Naive thymus-derived CD4-positive, alpha-beta T cell (primary cell): ENCODE measurements at regions of chr14 and their contacts with region 1.

Region 1: GRCh38 chr14:97978341-97978740 is 1181.2 kb downstream of the VRK1 start:
- DNase-seq: peak; percentile 33 to 83 (median 72)
- ATAC-seq: peak; percentile 84
- H3K4me3 ChIP-seq: peak overlapping the region; percentile 91
- H3K4me3 Mint-ChIP-seq: peak overlapping the region; percentile 85 to 99 (median 93)
- H3K27ac ChIP-seq: peak overlapping the region; percentile 85
- H3K27ac Mint-ChIP-seq: peak overlapping the region; percentile 68 to 99 (median 92)
- H3K4me1 ChIP-seq: peaks cover 25 to 40% of the 10 kb centered on the region in 2 donors
- H3K4me1 Mint-ChIP-seq: peaks cover 32 to 64% (median 50%) of the 10 kb centered on the region in 7 donors
- H3K27me3 ChIP-seq: no peaks in the 10 kb centered on the region
- H3K27me3 Mint-ChIP-seq: no peaks in the 10 kb centered on the region

Region 2: GRCh38 chr14:97138801-97139200 is 839.5 kb before region 1 on chr14:
- CTCF ChIA-PET with region 1: no interaction called
- POLR2A ChIA-PET with region 1: no interaction called
- intact Hi-C with region 1: no loop called
- DNase-seq: no peak
- ATAC-seq: no peak
- H3K4me3 ChIP-seq: no peak overlapping the region
- H3K4me3 Mint-ChIP-seq: no peak overlapping the region
- H3K27ac ChIP-seq: no peak overlapping the region
- H3K27ac Mint-ChIP-seq: peak overlapping the region in 1 of 9 donors; percentile 62
- H3K4me1 ChIP-seq: no peaks in the 10 kb centered on the region
- H3K4me1 Mint-ChIP-seq: peaks cover 0 to 11% (median 4%) of the 10 kb centered on the region in 7 donors
- H3K27me3 ChIP-seq: no peaks in the 10 kb centered on the region
- H3K27me3 Mint-ChIP-seq: peaks cover 0 to 6% (median 0%) of the 10 kb centered on the region in 5 donors

Region 3: DNA sequence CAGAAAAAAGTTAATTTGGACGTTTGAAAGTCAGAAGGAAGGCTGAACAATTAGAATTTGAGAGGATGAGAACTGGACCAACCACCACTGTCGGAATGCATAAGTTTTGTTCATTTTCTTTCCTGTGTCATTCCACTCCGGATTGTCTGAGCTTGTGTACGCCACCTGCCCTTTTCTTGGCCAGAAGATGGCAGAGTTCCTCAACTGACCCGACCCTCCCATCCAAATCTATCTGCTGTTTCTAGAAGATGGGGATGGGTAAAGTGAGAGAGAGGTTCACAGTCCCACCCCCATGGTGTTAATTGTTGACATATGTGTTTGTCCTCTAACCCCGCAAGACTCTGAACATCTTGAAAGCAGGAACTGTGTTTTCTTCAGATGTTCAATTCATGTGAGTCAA is 793.2 kb before region 1 on chr14:
- CTCF ChIA-PET with region 1: interaction called, 8 read pairs
- POLR2A ChIA-PET with region 1: no interaction called
- intact Hi-C with region 1: loop called in 1 of 2 experiments (anchors 1 kb)
- DNase-seq: peak in 6 of 9 donors; percentile 1 to 36 (median 30)
- ATAC-seq: peak; percentile 57
- H3K4me3 ChIP-seq: no peak overlapping the region
- H3K4me3 Mint-ChIP-seq: no peak overlapping the region
- H3K27ac ChIP-seq: no peak overlapping the region
- H3K27ac Mint-ChIP-seq: peak overlapping the region in 4 of 9 donors; percentile 7 to 53 (median 41)
- H3K4me1 ChIP-seq: no peaks in the 10 kb centered on the region
- H3K4me1 Mint-ChIP-seq: peaks cover 0 to 22% (median 6%) of the 10 kb centered on the region in 7 donors
- H3K27me3 ChIP-seq: no peaks in the 10 kb centered on the region
- H3K27me3 Mint-ChIP-seq: peaks cover 0 to 22% (median 0%) of the 10 kb centered on the region in 5 donors

Region 4: GRCh38 chr14:97707603-97708002 is 270.7 kb before region 1 on chr14:
- CTCF ChIA-PET with region 1: no interaction called
- POLR2A ChIA-PET with region 1: interaction called, 10 read pairs
- intact Hi-C with region 1: loop called (anchors 1 to 5 kb)
- DNase-seq: peak in 1 of 9 donors; percentile 19
- ATAC-seq: peak; percentile 25
- H3K4me3 ChIP-seq: peak overlapping the region; percentile 7
- H3K4me3 Mint-ChIP-seq: peak overlapping the region in 9 of 10 donors; percentile 7 to 83 (median 52)
- H3K27ac ChIP-seq: no peak overlapping the region
- H3K27ac Mint-ChIP-seq: peak overlapping the region; percentile 26 to 96 (median 85)
- H3K4me1 ChIP-seq: peaks cover 81 to 85% of the 10 kb centered on the region in 2 donors
- H3K4me1 Mint-ChIP-seq: peaks cover 70 to 100% (median 98%) of the 10 kb centered on the region in 7 donors
- H3K27me3 ChIP-seq: no peaks in the 10 kb centered on the region
- H3K27me3 Mint-ChIP-seq: no peaks in the 10 kb centered on the region

Region 5: DNA sequence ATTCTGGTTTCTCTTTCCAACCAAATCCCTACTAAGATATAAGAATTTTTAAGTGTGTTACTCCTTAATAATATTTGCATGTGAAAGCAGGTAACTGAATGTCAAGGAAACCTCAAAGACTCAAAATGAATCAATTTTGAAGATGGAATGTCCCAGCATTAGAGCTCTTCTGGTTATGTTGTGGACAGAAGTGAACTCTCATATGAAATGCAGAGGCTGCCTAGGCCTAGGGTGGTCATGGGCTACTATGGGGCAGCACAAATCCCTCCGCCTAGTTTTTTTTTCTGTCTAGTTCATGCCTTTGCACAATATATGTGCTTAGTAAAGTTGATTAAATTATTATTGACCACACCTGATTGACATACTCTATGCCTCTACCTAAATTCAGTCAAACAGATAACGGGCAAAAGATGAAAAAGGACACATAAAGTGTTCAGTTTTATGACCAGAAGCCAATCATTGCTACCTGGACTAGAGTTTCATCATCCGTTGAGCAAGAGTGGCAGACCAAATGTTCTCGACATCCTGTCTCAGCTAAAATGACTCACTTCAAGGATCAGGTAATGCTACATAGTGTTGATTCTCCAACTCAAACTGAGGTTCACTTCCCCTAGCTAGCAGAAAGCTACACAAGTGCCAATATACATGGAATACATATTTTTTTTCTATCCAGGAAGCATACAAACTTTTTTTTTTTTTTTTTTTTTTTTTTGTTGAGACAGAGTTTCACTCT is 30.2 kb after region 1 on chr14:
- CTCF ChIA-PET with region 1: interaction called, 6 read pairs
- POLR2A ChIA-PET with region 1: interaction called, 4 read pairs
- intact Hi-C with region 1: loop called in 1 of 2 experiments (anchors 2 kb)
- DNase-seq: peak in 4 of 9 donors; percentile 12 to 31 (median 26)
- ATAC-seq: no peak
- H3K4me3 ChIP-seq: no peak overlapping the region
- H3K4me3 Mint-ChIP-seq: peak overlapping the region in 5 of 10 donors; percentile 0 to 42 (median 25)
- H3K27ac ChIP-seq: no peak overlapping the region
- H3K27ac Mint-ChIP-seq: peak overlapping the region in 8 of 9 donors; percentile 5 to 60 (median 27)
- H3K4me1 ChIP-seq: peaks cover 0 to 26% of the 10 kb centered on the region in 2 donors
- H3K4me1 Mint-ChIP-seq: peaks cover 6 to 45% (median 37%) of the 10 kb centered on the region in 7 donors
- H3K27me3 ChIP-seq: no peaks in the 10 kb centered on the region
- H3K27me3 Mint-ChIP-seq: no peaks in the 10 kb centered on the region

Region 6: GRCh38 chr14:98173305-98173704 is 195.0 kb after region 1 on chr14:
- CTCF ChIA-PET with region 1: interaction called, 7 read pairs
- POLR2A ChIA-PET with region 1: interaction called, 18 read pairs
- intact Hi-C with region 1: loop called in 1 of 2 experiments (anchors 1 kb)
- DNase-seq: peak in 7 of 9 donors; percentile 71 to 84 (median 82)
- ATAC-seq: peak; percentile 78
- H3K4me3 ChIP-seq: peak overlapping the region; percentile 33
- H3K4me3 Mint-ChIP-seq: peak overlapping the region; percentile 74 to 90 (median 84)
- H3K27ac ChIP-seq: peak overlapping the region; percentile 81
- H3K27ac Mint-ChIP-seq: peak overlapping the region; percentile 89 to 100 (median 97)
- H3K4me1 ChIP-seq: peaks cover 100% of the 10 kb centered on the region in 2 donors
- H3K4me1 Mint-ChIP-seq: peaks cover 59 to 100% (median 99%) of the 10 kb centered on the region in 7 donors
- H3K27me3 ChIP-seq: no peaks in the 10 kb centered on the region
- H3K27me3 Mint-ChIP-seq: no peaks in the 10 kb centered on the region

Region 7: DNA sequence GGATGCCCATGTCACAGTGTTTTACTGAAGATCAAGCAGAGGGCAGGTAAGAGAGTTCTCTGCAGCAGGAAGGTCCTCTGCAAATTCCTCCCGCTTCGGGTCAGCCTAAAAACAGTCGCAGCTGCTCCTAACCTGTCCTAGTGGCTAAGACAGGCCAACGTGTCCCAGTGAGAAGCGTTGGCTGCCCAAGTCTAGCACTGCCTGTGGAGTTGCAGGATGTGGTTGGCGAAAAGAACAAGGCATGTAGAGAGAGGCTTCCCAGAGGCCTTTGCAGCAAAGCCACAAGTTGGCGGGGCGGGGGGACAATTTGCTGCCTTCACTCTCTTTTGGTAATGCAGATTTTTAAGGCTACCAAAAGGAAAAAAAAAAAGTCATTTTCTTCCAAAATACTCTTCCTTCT is 953.6 kb after region 1 on chr14:
- CTCF ChIA-PET with region 1: no interaction called
- POLR2A ChIA-PET with region 1: no interaction called
- intact Hi-C with region 1: loop called in 1 of 2 experiments (anchors 10 kb)
- DNase-seq: peak; percentile 31 to 90 (median 88)
- ATAC-seq: peak; percentile 97
- H3K4me3 ChIP-seq: peak overlapping the region; percentile 40
- H3K4me3 Mint-ChIP-seq: peak overlapping the region; percentile 66 to 92 (median 80)
- H3K27ac ChIP-seq: peak overlapping the region; percentile 66
- H3K27ac Mint-ChIP-seq: peak overlapping the region; percentile 82 to 98 (median 94)
- H3K4me1 ChIP-seq: peaks cover 31 to 76% of the 10 kb centered on the region in 2 donors
- H3K4me1 Mint-ChIP-seq: peaks cover 51 to 100% (median 99%) of the 10 kb centered on the region in 7 donors
- H3K27me3 ChIP-seq: no peaks in the 10 kb centered on the region
- H3K27me3 Mint-ChIP-seq: peaks cover 0 to 2% (median 0%) of the 10 kb centered on the region in 5 donors